ENCODE measurements at regions of chr19 and their contacts with region 1.

Region 1: GRCh38 chr19:53867225-53868090 is at the start of gene MYADM:
- DNase-seq: peak; percentile 100
- ATAC-seq: peak; percentile 71
- H3K4me3 Mint-ChIP-seq: peak within 1 kb of the TSS; percentile 93
- H3K27ac Mint-ChIP-seq: peak within 1 kb of the TSS; percentile 99
- H3K4me1 Mint-ChIP-seq: peaks cover 19% of the 10 kb centered on the region
- H3K27me3 Mint-ChIP-seq: peaks cover 5% of the 10 kb centered on the region
- CTCF ChIP-seq: no peak
- total RNA-seq, gene MYADM: 78.6 to 86.4 TPM (median 79.7 TPM) in 3 replicates

Region 2: DNA sequence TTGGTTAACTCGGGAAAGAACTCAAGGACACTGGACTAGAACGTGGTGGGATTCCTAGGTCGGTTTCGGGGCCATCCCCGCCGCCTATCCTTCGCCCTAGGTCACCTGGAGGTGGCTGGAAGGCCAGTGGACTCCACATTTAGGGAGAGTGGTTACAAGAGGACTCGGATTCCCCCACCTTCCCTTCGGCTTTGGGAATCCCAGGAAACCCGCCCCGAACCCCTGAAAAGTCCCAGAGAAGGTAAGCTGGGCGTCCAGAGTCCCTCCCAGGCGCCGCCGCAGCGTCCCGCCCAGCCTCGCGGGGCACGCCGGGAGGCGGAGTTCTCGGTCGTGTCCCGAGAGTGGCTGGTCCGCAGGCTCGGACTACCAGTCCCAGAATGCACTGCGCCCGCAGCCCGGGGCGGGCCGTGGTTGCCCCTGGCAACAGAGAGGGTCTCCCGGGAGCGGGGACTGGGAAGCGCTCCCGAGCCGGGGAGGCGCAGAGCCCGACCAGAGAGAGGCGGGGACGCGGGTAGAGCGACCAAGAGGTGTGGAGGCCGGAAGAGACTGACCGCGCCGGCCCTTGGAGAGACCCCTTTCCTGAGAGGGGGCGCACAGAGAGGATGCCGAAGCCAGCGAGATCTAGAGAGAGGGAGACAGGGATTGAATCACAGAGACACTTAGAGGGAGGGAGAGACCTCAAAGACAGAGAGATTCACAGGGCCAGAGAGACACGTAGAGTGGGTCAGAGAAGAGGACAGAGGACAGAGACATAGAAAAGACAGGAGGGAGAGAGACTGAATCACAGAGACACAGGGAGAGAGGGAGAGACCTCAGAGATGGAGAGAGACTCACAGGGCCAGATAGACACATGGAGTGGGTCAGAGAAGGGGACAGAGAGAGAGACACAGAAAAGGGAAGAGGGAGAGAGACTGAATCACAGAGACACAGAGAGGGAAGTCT is 12.0 kb after region 1 on chr19:
- CTCF ChIA-PET with region 1: interaction called, 37 read pairs
- POLR2A ChIA-PET with region 1: interaction called, 43 read pairs
- DNase-seq: peak; percentile 100
- ATAC-seq: peak; percentile 84
- H3K4me3 Mint-ChIP-seq: no peak overlapping the region
- H3K27ac Mint-ChIP-seq: peak overlapping the region; percentile 81
- H3K4me1 Mint-ChIP-seq: peaks cover 27% of the 10 kb centered on the region
- H3K27me3 Mint-ChIP-seq: peaks cover 11% of the 10 kb centered on the region
- CTCF ChIP-seq: no peak

Region 3: DNA sequence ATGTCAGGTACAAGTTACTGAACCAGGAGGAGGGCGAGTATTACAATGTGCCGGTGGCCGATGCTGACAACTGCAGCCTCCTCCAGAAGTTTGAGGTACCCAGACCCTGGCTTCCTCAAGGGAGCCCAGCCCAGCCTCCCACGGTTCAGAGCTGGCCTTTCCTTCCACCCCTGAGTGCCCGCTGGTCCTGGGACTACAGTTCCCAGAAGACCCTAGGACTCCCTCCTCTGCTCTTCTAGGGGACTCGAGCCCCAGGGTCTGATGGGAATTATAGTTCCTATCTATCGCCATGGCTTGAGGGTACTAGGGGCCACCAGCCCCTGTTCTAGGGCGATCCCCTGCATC is 25.5 kb after region 1 on chr19:
- CTCF ChIA-PET with region 1: interaction called, 3 read pairs
- POLR2A ChIA-PET with region 1: interaction called, 24 read pairs
- DNase-seq: peak; percentile 69
- ATAC-seq: peak; percentile 61
- H3K4me3 Mint-ChIP-seq: no peak overlapping the region
- H3K27ac Mint-ChIP-seq: peak overlapping the region; percentile 91; the same call in 1 of the 2 replicates
- H3K4me1 Mint-ChIP-seq: peaks cover 35% of the 10 kb centered on the region
- H3K27me3 Mint-ChIP-seq: peaks cover 2% of the 10 kb centered on the region; the same call in 1 of the 2 replicates
- CTCF ChIP-seq: no peak

Region 4: DNA sequence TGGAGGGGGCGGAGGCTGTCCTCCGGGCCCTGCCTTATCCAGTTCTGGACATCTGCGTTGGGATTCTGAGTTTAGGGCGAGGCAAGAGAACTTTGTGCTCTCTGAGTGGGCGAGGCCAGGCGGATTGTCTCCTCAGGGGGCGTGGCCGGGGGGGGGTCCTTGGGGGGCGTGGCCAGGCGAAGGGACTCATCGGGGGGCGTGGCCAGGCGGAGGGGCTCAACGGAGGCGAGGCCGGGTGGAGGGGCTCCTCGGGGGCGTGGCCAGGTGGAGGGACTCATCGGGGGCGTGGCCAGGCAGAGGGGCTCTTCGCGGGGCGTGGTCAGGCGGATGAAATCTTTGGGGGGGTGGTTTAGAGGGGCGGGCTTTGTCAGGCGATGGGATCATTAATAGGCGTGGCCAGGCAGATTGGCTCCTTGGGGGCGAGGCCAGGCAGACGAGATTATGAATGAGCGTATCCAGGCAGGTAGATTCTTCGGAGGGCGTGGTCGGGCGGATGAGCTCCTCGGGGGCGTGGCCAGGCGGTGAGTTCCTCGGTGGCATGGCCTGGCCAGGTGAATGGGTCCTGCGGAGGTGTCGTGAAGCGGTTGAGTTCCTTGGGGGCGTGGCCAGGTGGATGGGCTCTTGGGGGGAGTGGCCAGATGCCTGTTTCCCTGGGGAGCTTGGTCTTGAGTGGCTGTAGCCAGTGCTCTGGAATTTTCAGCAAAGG is 31.3 kb after region 1 on chr19:
- CTCF ChIA-PET with region 1: interaction called, 3 read pairs
- POLR2A ChIA-PET with region 1: interaction called, 24 read pairs
- DNase-seq: peak; percentile 100
- ATAC-seq: peak; percentile 92
- H3K4me3 Mint-ChIP-seq: peak overlapping the region; percentile 81
- H3K27ac Mint-ChIP-seq: peak overlapping the region; percentile 100
- H3K4me1 Mint-ChIP-seq: peaks cover 33% of the 10 kb centered on the region
- H3K27me3 Mint-ChIP-seq: 0 out of 2 replicates have a peak, but pooled peaks cover 9% of the 10 kb centered on the region
- CTCF ChIP-seq: no peak

Region 5: GRCh38 chr19:53958168-53958571 is 90.7 kb after region 1 on chr19:
- CTCF ChIA-PET with region 1: no interaction called
- POLR2A ChIA-PET with region 1: interaction called, 13 read pairs
- DNase-seq: peak; percentile 85
- ATAC-seq: peak; percentile 27
- H3K4me3 Mint-ChIP-seq: peak overlapping the region; percentile 79
- H3K27ac Mint-ChIP-seq: peak overlapping the region; percentile 77
- H3K4me1 Mint-ChIP-seq: peaks cover 49% of the 10 kb centered on the region
- H3K27me3 Mint-ChIP-seq: no peaks in the 10 kb centered on the region; the same call in 1 of the 2 replicates
- CTCF ChIP-seq: no peak

Region 6: GRCh38 chr19:53982611-53983010 is 115.2 kb after region 1 on chr19:
- CTCF ChIA-PET with region 1: interaction called, 13 read pairs
- POLR2A ChIA-PET with region 1: interaction called, 29 read pairs
- DNase-seq: peak; percentile 62
- ATAC-seq: no peak
- H3K4me3 Mint-ChIP-seq: no peak overlapping the region
- H3K27ac Mint-ChIP-seq: no peak overlapping the region
- H3K4me1 Mint-ChIP-seq: peaks cover 11% of the 10 kb centered on the region
- H3K27me3 Mint-ChIP-seq: peaks cover 4% of the 10 kb centered on the region; the same call in 1 of the 2 replicates
- CTCF ChIP-seq: no peak

Region 7: GRCh38 chr19:54047616-54048015 is 180.2 kb after region 1 on chr19:
- CTCF ChIA-PET with region 1: no interaction called
- POLR2A ChIA-PET with region 1: no interaction called
- DNase-seq: no peak
- ATAC-seq: no peak
- H3K4me3 Mint-ChIP-seq: no peak overlapping the region
- H3K27ac Mint-ChIP-seq: no peak overlapping the region
- H3K4me1 Mint-ChIP-seq: no peaks in the 10 kb centered on the region
- H3K27me3 Mint-ChIP-seq: peaks cover 21% of the 10 kb centered on the region
- CTCF ChIP-seq: no peak